K562 (cell line): ENCODE measurements at regions of chr6 and their contacts with region 1.

Region 1: DNA sequence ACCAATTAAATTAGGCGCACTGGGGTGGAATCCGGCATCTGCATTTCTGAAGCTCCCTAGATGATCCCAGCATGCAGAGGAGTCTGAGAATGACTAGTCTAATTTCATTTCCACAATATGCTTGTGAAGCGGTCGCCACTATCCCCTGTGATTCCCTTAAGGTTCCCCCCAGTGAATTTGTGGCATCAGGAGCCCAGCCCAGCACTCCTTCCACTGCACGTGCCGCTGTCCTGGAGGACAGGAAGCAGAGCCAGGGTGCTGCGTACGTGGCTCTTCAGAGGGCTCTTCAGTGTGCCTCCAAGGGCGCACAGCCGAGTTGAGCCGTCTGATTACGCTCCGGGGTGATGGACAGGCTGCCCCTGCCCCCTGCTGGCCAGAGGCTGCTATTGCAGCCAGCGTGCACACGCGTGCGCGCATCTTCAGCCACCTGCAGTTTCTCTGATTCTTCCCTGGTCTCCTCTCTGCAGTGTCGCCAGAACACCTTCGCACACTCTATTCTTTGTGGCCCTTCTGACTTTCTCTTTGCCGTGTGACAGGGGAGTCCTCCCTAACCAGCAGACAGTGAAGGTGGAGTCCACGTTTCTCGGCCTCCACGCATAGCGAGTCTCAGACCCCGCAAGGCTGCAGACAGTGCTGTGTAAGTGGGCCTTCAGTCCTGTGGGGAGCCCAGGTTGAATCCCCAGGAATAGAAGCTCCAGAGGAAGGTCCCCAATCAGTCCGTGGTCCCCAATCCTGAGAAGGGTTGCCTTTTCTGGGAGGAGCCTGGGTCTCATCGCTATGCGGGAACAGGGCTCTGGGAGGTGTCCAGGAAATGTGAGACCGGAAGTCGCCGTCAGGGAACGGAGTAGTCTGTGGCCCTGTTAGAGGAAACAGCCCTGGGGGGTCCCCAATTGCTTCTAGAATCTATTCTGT is 16.5 kb upstream of the NCR2 start:
- DNase-seq: peak; percentile 87 to 91 (median 88)
- ATAC-seq: peak; percentile 95
- H3K4me3 ChIP-seq: peak overlapping the region; percentile 9; the same call in 1 of the 2 replicates
- H3K27ac ChIP-seq: no peak overlapping the region; the same call in 1 of the 3 replicates
- H3K4me1 ChIP-seq: peaks cover 8 to 21% of the 10 kb centered on the region in 2 experiments; a peak in 4 of 5 replicates
- H3K27me3 ChIP-seq: peaks cover under 1 to 4% of the 10 kb centered on the region in 2 experiments; a peak in 3 of 5 replicates
- CTCF ChIP-seq: peak; percentile 96 to 100 (median 99)
- EP300 ChIP-seq: 0 out of 2 replicates have a peak, but pooled peaks have one; percentile 29
- POLR2A ChIP-seq: no peak
- RAD21 ChIP-seq: peak; percentile 95 to 98

Region 2: DNA sequence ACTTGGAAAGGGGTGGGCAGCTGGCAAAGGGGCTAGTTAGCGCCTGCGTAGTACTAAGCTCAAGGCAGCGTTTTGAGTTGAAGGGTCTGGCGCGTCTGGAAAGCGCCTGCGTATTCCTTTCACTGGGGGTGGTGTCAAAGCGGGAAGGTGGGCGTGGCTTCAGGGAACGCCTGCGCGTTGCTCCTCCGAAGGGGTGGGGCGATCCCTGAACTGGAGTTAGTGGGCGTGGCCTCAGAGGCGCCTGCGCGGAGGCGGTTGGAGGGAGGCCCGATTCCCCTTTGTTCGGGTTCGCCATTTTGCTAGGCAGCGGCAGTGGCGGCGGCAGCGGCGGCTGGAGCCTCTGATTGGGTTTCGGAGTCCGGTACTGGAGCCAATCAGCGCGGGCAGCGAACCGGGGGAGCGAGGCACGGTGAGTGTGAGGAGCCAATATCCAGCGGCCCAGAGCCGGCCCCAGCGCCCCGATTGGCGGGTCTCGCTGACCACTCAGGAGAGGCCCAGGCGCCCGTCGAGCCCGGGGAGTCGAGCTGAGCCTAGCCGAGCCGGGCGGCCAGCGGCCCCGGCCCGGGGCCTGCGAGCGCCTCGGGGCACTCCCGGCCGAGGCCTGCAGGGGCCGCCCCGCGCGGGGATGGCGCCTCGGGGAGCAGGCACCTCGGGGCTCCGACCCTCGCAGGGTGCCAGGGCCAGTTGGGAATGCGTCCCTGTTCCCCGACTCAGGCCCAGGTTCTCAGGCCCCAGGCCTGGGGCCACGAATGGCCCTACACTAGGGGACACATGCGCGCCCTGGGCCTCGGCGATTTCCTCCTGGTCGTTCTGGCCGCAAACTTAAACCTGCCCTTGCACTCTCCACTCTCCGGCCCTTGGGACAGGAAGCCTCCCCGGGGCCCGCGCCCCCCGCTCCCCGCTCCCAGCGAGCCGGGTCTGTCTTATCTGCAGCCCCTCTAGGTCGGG is 246.0 kb before region 1 on chr6 and contains the start of gene NFYA:
- CTCF ChIA-PET with region 1: no interaction called
- POLR2A ChIA-PET with region 1: no interaction called
- in situ Hi-C with region 1: no loop called
- intact Hi-C with region 1: loop called (anchors 5 kb)
- DNase-seq: peak in 3 of 4 experiments; percentile 97 to 98 (median 97)
- ATAC-seq: peak; percentile 84
- H3K4me3 ChIP-seq: peak within 1 kb of the TSS; percentile 83
- H3K27ac ChIP-seq: peak within 1 kb of the TSS; percentile 94
- H3K4me1 ChIP-seq: peaks cover 9 to 21% of the 10 kb centered on the region in 2 experiments
- H3K27me3 ChIP-seq: no peaks in the 10 kb centered on the region
- CTCF ChIP-seq: peak; percentile 44 to 54 (median 45); a peak in 4 of 6 replicates
- EP300 ChIP-seq: no peak
- POLR2A ChIP-seq: peak; percentile 87; the same call in 1 of the 2 replicates
- RAD21 ChIP-seq: peak in 1 of 2 experiments; percentile 42; a peak in 2 of 4 replicates
- polyA plus RNA-seq, gene NFYA: 7.3 to 10.1 TPM

Region 3: GRCh38 chr6:41191569-41191968 is 127.3 kb before region 1 on chr6:
- CTCF ChIA-PET with region 1: no interaction called
- POLR2A ChIA-PET with region 1: interaction called, 3 read pairs
- in situ Hi-C with region 1: no loop called
- intact Hi-C with region 1: loop called (anchors 5 kb)
- DNase-seq: peak; percentile 62 to 76 (median 66)
- ATAC-seq: peak; percentile 94
- H3K4me3 ChIP-seq: no peak overlapping the region
- H3K27ac ChIP-seq: no peak overlapping the region
- H3K4me1 ChIP-seq: no peaks in the 10 kb centered on the region
- H3K27me3 ChIP-seq: 0 out of 5 replicates have a peak, but pooled peaks cover 0 to 8% of the 10 kb centered on the region in 2 experiments
- CTCF ChIP-seq: peak; percentile 65 to 83 (median 74)
- EP300 ChIP-seq: no peak
- POLR2A ChIP-seq: no peak
- RAD21 ChIP-seq: peak in 1 of 2 experiments; percentile 57; a peak in 2 of 4 replicates

Region 4: DNA sequence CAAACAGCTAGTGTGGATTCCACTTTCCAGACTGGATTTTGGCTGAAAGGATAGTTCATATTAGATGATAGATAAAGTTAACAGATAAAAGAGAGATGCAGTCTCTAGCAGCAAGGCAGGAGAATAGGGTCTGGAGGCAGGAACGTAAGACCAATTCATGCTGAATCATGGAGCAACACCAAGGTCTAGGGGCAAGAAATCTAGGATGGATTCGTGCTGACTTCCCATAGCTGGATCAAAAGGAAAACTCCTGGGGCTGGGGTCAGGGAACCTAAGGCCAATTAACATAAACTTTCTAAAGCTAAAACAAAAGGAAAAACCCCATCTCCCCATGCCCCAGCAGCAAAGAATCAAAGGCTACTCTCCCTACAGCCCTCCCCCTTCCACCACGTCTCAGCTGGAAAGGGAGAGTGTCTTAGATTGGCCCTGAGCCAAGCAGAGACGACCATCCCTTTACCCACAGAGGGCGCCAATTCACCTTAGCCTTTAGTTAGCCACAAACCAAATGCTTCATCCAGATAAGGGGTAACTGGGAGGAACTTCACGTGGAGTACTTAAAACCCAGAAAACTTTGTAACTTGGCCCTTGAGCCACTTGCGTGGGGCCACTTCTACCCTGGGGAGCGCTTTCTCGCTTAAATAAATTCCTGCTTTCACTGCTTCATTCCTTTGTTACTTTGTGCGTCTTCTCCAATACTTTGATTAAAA is 40.1 kb before region 1 on chr6:
- CTCF ChIA-PET with region 1: interaction called, 16 read pairs
- POLR2A ChIA-PET with region 1: interaction called, 3 read pairs
- in situ Hi-C with region 1: no loop called
- intact Hi-C with region 1: loop called (anchors 1 kb)
- DNase-seq: peak; percentile 89 to 97 (median 91)
- ATAC-seq: peak; percentile 97
- H3K4me3 ChIP-seq: no peak overlapping the region
- H3K27ac ChIP-seq: no peak overlapping the region
- H3K4me1 ChIP-seq: peaks cover 0 to 8% of the 10 kb centered on the region in 2 experiments; a peak in 2 of 5 replicates
- H3K27me3 ChIP-seq: peaks cover 21 to 47% of the 10 kb centered on the region in 2 experiments; a peak in 4 of 5 replicates
- CTCF ChIP-seq: peak; percentile 87 to 94 (median 90)
- EP300 ChIP-seq: peak; percentile 80
- POLR2A ChIP-seq: no peak
- RAD21 ChIP-seq: peak; percentile 71 to 82

Region 5: DNA sequence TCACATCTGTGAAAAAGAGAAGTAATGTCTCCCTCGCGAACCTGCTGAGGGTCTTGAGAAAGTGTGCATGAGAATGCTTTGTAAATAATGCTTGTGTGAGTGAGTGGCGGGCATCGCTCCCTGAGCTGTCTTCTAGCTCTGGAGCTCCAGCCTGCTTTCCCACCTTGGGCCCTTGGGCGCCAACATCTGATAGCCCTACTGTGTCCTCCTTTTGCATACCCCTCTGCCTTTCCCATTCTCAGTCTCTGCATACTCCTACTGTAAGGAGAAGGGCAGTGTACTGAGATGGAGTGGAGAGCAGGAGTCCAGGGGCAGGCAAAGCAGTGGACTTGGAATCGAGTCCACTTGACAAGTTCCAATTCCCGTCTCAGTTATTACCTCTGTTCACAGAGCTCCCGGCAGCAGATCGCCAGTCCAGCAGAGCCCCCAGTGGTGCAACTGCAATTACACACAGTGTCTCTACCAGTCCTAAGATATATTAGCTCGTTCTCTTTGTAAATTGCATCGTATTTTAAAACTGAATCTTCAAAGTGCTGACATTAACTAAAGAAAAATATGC is 15.7 kb after region 1 on chr6:
- CTCF ChIA-PET with region 1: no interaction called
- POLR2A ChIA-PET with region 1: interaction called, 16 read pairs
- in situ Hi-C with region 1: no loop called
- intact Hi-C with region 1: no loop called
- DNase-seq: peak in 3 of 4 experiments; percentile 29 to 44 (median 31)
- ATAC-seq: peak; percentile 88
- H3K4me3 ChIP-seq: no peak overlapping the region
- H3K27ac ChIP-seq: no peak overlapping the region
- H3K4me1 ChIP-seq: peaks cover 0 to 3% of the 10 kb centered on the region in 2 experiments; a peak in 2 of 5 replicates
- H3K27me3 ChIP-seq: peaks cover 25 to 59% of the 10 kb centered on the region in 2 experiments
- CTCF ChIP-seq: peak; percentile 48 to 70 (median 69)
- EP300 ChIP-seq: no peak
- POLR2A ChIP-seq: no peak
- RAD21 ChIP-seq: peak; percentile 52 to 57

Region 6: DNA sequence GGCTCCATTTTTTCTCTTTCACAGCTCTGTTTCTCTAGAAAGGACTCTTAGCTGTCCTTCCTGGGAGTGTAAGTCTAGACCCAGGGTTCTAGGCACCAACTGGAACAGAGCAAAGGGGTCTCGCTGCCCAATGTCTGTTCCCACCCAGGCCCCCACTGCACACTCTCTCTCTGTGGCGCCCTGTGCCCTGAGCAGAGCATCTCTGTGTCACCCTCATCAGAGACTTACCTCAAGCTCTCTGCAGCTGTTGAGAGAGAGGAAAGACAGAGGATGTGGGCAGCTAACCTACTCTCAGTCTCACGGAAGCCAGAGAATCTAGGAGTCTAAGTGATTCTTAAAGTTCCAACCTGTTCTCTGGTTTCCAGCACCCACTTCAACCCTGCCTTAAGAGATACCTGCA is 26.0 kb after region 1 on chr6:
- CTCF ChIA-PET with region 1: no interaction called
- POLR2A ChIA-PET with region 1: no interaction called
- in situ Hi-C with region 1: no loop called
- intact Hi-C with region 1: no loop called
- DNase-seq: no peak
- ATAC-seq: no peak
- H3K4me3 ChIP-seq: no peak overlapping the region
- H3K27ac ChIP-seq: no peak overlapping the region
- H3K4me1 ChIP-seq: no peaks in the 10 kb centered on the region
- H3K27me3 ChIP-seq: peaks cover 41 to 69% of the 10 kb centered on the region in 2 experiments
- CTCF ChIP-seq: no peak
- EP300 ChIP-seq: no peak
- POLR2A ChIP-seq: no peak
- RAD21 ChIP-seq: no peak

Region 7: DNA sequence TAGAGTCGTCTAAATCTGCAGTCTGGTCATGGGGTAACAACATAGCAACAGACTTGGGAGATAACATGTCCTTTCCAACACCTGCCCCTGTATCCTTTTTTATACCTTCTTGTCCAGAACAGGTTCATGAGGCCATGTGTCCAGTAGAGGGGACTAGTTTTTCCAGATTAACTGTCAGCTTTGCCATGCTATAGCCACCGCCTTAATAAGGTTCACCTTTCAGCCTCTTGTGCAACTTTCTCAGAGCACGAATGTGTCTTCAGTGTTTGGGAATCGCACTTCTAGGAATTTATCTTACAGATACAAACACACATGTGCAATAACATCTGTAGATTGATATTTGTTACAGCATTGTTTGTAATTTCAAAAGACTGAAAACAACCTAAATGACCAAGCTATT is 37.9 kb after region 1 on chr6:
- CTCF ChIA-PET with region 1: no interaction called
- POLR2A ChIA-PET with region 1: no interaction called
- in situ Hi-C with region 1: no loop called
- intact Hi-C with region 1: no loop called
- DNase-seq: no peak
- ATAC-seq: peak; percentile 47; the same call in 1 of the 3 replicates
- H3K4me3 ChIP-seq: no peak overlapping the region
- H3K27ac ChIP-seq: no peak overlapping the region
- H3K4me1 ChIP-seq: no peaks in the 10 kb centered on the region
- H3K27me3 ChIP-seq: peaks cover 22 to 26% of the 10 kb centered on the region in 2 experiments
- CTCF ChIP-seq: no peak; a peak in 1 of 6 replicates
- EP300 ChIP-seq: no peak
- POLR2A ChIP-seq: no peak
- RAD21 ChIP-seq: no peak